HepG2 (cell line): ENCODE measurements at regions of chr22 and their contacts with region 1.

Region 1: GRCh38 chr22:48943567-48944432 is 883.9 kb downstream of the BRD1 start:
- DNase-seq: peak; percentile 97
- ATAC-seq: peak; percentile 96
- H3K4me3 ChIP-seq: peak overlapping the region in 1 of 3 experiments; percentile 25; a peak in 1 of 6 replicates
- H3K27ac ChIP-seq: peak overlapping the region; percentile 85
- H3K4me1 ChIP-seq: peaks cover 69% of the 10 kb centered on the region
- H3K27me3 ChIP-seq: no peaks in the 10 kb centered on the region
- CTCF ChIP-seq: peak; percentile 98
- EP300 ChIP-seq: peak; percentile 78 to 81
- POLR2A ChIP-seq: peak; percentile 44 to 61; a peak in 3 of 4 replicates
- RAD21 ChIP-seq: peak; percentile 90

Region 2: GRCh38 chr22:48919187-48919590 is 24.6 kb before region 1 on chr22:
- CTCF ChIA-PET with region 1: no interaction called
- POLR2A ChIA-PET with region 1: interaction called, 14 read pairs
- in situ Hi-C with region 1: no loop called
- intact Hi-C with region 1: no loop called
- DNase-seq: no peak
- ATAC-seq: peak; percentile 40
- H3K4me3 ChIP-seq: no peak overlapping the region
- H3K27ac ChIP-seq: peak overlapping the region; percentile 42
- H3K4me1 ChIP-seq: peaks cover 52% of the 10 kb centered on the region
- H3K27me3 ChIP-seq: peaks cover 4 to 8% of the 10 kb centered on the region in 2 experiments; a peak in 3 of 5 replicates
- CTCF ChIP-seq: no peak
- EP300 ChIP-seq: no peak
- POLR2A ChIP-seq: no peak
- RAD21 ChIP-seq: no peak

Region 3: DNA sequence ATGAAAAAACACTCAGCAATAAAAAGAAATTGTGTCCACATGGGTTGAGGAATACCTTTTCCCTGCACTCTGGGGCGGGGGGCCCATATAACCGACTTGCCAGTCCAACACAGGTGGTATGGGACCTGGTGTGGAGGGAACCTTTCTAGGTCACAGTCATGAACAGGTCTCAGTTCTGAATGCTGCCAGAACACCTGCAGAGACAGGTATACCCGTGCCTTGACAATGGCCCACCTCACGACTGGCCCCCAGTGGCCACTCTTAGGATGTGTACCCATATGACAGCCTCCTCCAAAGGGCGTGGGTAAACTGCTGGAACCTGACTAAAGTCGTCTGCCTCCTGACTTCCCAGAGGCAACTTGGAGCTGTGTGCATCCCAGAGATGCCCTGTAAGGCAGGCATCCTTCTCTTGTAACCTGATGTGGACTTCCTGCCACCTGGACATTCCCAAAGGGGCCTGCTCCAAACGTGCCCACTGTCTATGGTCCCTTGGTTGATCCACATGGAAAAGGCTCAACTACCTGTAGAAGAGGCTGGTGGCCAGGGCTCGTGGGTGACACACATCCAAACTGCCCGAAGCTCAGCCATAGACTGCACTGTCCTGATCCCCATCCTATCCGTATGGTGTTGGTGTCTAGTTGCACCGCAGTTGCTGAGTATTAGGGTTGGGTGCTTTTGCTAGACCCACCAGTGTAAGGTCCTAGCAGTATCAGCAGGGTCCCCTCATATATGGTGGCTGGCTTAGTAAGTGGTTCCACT is 24.6 kb after region 1 on chr22:
- CTCF ChIA-PET with region 1: interaction called, 5 read pairs
- POLR2A ChIA-PET with region 1: no interaction called
- in situ Hi-C with region 1: no loop called
- intact Hi-C with region 1: loop called (anchors 1 kb)
- DNase-seq: peak; percentile 23
- ATAC-seq: peak; percentile 98
- H3K4me3 ChIP-seq: no peak overlapping the region
- H3K27ac ChIP-seq: no peak overlapping the region
- H3K4me1 ChIP-seq: no peaks in the 10 kb centered on the region
- H3K27me3 ChIP-seq: peaks cover 0 to 10% of the 10 kb centered on the region in 2 experiments; a peak in 1 of 5 replicates
- CTCF ChIP-seq: peak; percentile 83
- EP300 ChIP-seq: no peak
- POLR2A ChIP-seq: no peak
- RAD21 ChIP-seq: peak; percentile 49; the same call in 1 of the 2 replicates

Region 4: GRCh38 chr22:49305214-49305909 is 361.6 kb after region 1 on chr22:
- CTCF ChIA-PET with region 1: no interaction called
- POLR2A ChIA-PET with region 1: no interaction called
- in situ Hi-C with region 1: loop called (anchors 10 kb)
- intact Hi-C with region 1: no loop called
- DNase-seq: peak; percentile 27
- ATAC-seq: peak; percentile 94
- H3K4me3 ChIP-seq: peak overlapping the region in 1 of 3 experiments; percentile 28; a peak in 1 of 6 replicates
- H3K27ac ChIP-seq: no peak overlapping the region
- H3K4me1 ChIP-seq: no peaks in the 10 kb centered on the region
- H3K27me3 ChIP-seq: peaks cover 7 to 70% of the 10 kb centered on the region in 2 experiments; a peak in 4 of 5 replicates
- CTCF ChIP-seq: peak; percentile 96
- EP300 ChIP-seq: no peak
- POLR2A ChIP-seq: no peak
- RAD21 ChIP-seq: peak; percentile 94